ENCODE measurements at regions of chr10 and their contacts with region 1.

Region 1: GRCh38 chr10:86710987-86711512 is 42.7 kb downstream of the LDB3 start:
- DNase-seq: peak; percentile 83
- ATAC-seq: peak; percentile 90
- H3K4me3 ChIP-seq: peak overlapping the region; percentile 75
- H3K27ac ChIP-seq: peak overlapping the region; percentile 64
- H3K4me1 ChIP-seq: peaks cover 9% of the 10 kb centered on the region
- H3K27me3 ChIP-seq: no peaks in the 10 kb centered on the region
- CTCF ChIP-seq: peak; percentile 60

Region 2: DNA sequence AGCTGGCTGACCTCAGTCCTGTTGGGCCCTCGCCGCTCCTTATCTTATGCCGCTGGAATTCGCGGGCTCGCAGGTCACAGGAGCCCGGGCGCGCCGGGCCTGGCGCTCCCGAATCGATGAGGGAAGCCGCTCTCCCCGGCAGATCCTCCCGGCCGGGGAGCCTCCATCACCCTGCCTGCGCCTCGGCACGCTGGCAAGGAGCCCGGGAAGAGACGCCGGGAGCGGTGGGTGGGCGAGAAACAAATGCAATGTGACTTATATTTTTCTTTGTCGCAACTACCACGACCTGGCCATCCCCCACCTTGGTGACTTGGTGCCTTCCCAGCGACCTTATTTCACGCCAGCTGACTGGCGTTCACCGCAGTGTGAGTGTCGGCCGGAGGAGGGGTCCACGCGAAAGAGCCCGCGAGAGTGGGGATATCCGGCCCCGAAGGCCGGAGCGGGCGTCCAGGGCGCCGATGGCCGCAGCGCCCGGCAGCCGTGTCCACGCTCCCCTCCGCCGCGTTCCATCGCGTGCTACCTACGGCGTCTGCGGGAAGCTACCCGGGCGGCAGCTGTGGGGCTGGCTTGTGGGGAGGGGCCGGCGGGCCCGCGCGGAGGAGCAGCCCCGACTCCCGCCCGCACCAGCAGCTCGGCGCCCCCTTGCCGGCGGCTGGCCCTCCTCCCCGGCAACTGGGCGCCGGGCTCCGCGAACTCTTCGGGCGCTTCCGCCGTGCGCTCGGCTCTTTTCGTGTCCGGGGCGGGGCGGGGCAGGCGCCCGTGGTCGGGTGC is 44.9 kb after region 1 on chr10:
- CTCF ChIA-PET with region 1: interaction called, 5 read pairs
- POLR2A ChIA-PET with region 1: no interaction called
- intact Hi-C with region 1: loop called (anchors 2 kb)
- DNase-seq: peak; percentile 57
- ATAC-seq: peak; percentile 80
- H3K4me3 ChIP-seq: peak overlapping the region; percentile 90
- H3K27ac ChIP-seq: peak overlapping the region; percentile 60
- H3K4me1 ChIP-seq: peaks cover 9% of the 10 kb centered on the region; the same call in 1 of the 2 replicates
- H3K27me3 ChIP-seq: no peaks in the 10 kb centered on the region
- CTCF ChIP-seq: no peak

Region 3: GRCh38 chr10:86827639-86828038 is 116.6 kb after region 1 on chr10:
- CTCF ChIA-PET with region 1: no interaction called
- POLR2A ChIA-PET with region 1: no interaction called
- intact Hi-C with region 1: loop called (anchors 5 kb)
- DNase-seq: peak; percentile 43
- ATAC-seq: peak; percentile 77
- H3K4me3 ChIP-seq: no peak overlapping the region
- H3K27ac ChIP-seq: no peak overlapping the region
- H3K4me1 ChIP-seq: peaks cover 24% of the 10 kb centered on the region
- H3K27me3 ChIP-seq: no peaks in the 10 kb centered on the region
- CTCF ChIP-seq: no peak

Region 4: GRCh38 chr10:86899670-86900276 is 188.7 kb after region 1 on chr10:
- CTCF ChIA-PET with region 1: no interaction called
- POLR2A ChIA-PET with region 1: no interaction called
- intact Hi-C with region 1: loop called (anchors 1 kb)
- DNase-seq: peak; percentile 67
- ATAC-seq: peak; percentile 72
- H3K4me3 ChIP-seq: no peak overlapping the region
- H3K27ac ChIP-seq: no peak overlapping the region
- H3K4me1 ChIP-seq: no peaks in the 10 kb centered on the region
- H3K27me3 ChIP-seq: no peaks in the 10 kb centered on the region
- CTCF ChIP-seq: peak; percentile 73

Measured in PC-3 (cell line).